Right cardiac atrium (tissue), 5 donors: ENCODE measurements at regions of chr14 and their contacts with region 1.

Region 1: DNA sequence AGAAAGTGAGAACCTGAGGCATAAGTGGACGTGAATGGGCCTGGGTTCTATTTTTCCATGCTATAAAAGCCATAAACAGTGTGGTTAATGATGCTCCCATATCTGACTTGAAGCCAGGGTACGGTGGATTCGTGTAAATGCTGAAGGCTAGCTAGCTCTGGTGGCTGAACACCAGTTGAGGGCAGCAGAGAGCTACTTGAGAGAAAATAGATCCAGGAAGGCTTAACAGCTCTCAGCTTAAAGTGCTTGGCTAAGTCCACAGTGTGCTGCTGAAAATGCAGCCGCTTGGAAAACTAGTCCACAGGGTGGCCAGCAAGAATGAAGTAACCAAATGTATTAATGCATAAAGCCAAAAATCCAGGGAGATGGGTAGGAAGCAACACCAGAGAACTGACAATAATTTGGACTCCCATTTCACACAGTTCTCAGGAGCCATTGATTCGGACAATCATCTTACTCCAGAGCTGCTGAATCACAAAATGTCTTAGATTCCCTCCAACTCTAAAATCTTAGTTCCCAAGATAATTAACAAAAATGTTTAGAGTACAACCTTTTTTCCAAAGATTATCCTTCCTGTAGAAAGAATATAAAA is 15.0 kb upstream of the FOXG1 start:
- DNase-seq: no peak
- ATAC-seq: no peak
- H3K4me3 ChIP-seq: no peak overlapping the region
- H3K27ac ChIP-seq: no peak overlapping the region
- H3K4me1 ChIP-seq: no peaks in the 10 kb centered on the region
- H3K27me3 ChIP-seq: peaks cover 3% of the 10 kb centered on the region

Region 2: DNA sequence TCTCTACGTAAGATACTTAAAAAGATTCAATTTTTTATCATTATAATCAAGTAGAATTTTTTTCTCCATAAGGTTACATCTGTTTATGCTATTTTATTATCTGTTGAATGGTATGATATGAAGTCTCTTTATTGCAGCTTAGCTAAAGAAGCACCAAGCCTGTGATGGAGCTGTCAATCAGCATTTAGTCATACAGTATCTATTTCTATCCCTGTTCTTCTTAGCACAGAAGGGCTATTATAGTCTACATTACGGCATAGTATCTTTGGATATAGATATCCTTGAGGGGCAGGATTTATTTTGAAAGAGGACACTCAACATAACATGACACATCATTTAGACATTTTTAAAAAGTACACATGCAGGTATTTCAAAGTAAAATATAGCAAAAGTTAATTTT is 292.2 kb after region 1 on chr14:
- intact Hi-C with region 1: no loop called
- DNase-seq: no peak
- ATAC-seq: no peak
- H3K4me3 ChIP-seq: no peak overlapping the region
- H3K27ac ChIP-seq: no peak overlapping the region
- H3K4me1 ChIP-seq: no peaks in the 10 kb centered on the region
- H3K27me3 ChIP-seq: no peaks in the 10 kb centered on the region

Region 3: DNA sequence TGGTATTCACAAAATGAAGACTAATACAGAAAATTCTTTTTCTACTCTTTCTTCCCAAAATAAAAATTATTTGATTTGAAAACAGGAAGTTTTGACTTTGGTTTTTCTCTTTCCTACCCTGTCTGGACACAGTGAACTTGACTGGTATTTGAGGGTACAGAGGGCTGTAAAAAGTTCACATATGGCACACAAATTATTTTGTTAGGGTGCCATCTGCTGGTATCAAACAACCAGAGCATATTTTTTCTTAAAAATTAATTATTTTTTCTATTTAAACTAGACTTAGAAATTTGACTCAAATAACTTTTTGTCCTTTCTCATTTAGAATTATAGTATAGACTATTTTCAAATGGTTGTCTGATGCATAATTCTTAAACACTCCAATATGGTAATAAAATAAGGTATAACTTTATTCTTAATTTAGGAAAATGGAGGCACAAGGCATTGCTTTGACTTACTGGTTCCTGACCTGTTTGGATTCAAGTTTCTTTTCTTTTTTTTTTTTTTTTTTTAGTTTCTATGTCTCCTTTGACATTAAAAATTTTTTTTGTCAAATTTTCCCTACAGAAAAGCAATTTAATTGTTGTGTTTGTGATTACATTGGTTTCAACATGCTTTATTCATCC is 785.4 kb after region 1 on chr14:
- intact Hi-C with region 1: loop called in 3 of 4 experiments (anchors 5 to 10 kb)
- DNase-seq: no peak
- ATAC-seq: no peak
- H3K4me3 ChIP-seq: no peak overlapping the region
- H3K27ac ChIP-seq: no peak overlapping the region
- H3K4me1 ChIP-seq: no peaks in the 10 kb centered on the region
- H3K27me3 ChIP-seq: no peaks in the 10 kb centered on the region

Region 4: DNA sequence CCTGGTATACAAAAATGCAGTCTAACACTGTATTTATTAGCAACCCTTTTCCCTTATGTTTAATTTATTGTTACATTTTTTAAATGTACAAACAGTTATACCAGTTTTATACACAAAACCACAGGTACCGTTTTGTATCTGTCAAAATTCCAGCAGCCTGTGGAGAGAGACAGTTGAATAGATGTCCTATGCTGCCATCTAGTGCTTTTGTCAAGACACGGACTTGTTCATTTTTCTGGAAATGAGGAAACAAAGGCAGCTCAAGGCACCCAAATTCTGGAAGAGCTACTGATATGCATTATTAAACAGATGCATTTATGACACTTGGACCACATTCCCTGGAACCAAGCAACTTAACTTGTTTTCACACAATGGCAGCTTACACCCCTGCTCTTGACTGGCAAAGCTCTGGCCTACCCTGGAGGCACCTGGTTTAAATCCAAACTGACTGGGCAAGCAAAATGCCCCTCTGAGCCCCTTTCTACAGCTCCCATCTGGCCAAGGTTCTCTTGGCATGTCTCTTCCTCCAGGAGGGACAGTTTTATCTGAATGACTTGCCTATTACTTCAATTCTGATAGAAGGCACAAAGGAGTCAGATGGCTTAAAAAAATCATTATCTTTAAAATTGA is 1463.0 kb after region 1 on chr14:
- intact Hi-C with region 1: loop called in 2 of 4 experiments (anchors 10 kb)
- DNase-seq: no peak
- ATAC-seq: peak in 1 of 2 donors; percentile 26
- H3K4me3 ChIP-seq: no peak overlapping the region
- H3K27ac ChIP-seq: no peak overlapping the region
- H3K4me1 ChIP-seq: no peaks in the 10 kb centered on the region
- H3K27me3 ChIP-seq: no peaks in the 10 kb centered on the region